Common myeloid progenitor, CD34-positive (primary cell): ENCODE measurements at regions of chr9 and their contacts with region 1.

Region 1: DNA sequence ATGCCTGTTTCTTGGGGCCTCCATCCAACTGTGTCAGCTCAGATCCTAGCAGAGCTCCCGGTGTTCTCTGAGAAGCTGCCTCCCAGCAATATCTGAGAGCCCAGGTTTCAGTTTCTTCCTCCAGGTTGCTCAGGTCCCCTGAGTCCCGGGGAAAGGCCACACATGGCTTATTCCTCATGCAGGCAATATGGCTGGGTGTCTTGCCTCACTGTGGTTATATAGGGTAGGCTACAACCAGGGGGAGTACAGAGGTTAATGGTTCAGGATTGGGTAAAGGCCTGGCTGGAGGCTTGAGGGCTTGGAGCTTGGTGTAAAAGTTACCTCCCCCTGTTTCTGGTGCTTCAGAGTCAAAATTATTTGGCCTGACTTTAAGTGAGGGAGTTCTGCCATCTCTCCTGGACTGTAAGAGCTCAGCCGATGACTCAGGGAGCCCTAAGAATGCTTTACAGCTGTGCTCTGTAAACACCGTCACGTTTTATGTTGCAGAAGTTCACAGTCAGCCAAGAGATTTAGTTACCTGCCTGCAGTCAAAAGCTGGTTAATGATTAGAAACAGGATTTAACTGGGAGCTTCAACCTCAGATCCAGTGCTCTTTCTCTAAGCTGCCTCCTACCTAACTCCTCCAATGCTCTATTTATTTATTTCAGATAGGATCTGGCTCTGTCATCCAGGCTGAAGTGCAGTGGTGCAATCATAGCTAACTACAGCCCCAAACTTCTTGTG is 24.3 kb upstream of the UBAP2 start:
- DNase-seq: no peak
- H3K4me3 ChIP-seq: no peak overlapping the region
- H3K27ac ChIP-seq: no peak overlapping the region
- H3K4me1 ChIP-seq: no peaks in the 10 kb centered on the region
- H3K27me3 ChIP-seq: no peaks in the 10 kb centered on the region

Region 2: DNA sequence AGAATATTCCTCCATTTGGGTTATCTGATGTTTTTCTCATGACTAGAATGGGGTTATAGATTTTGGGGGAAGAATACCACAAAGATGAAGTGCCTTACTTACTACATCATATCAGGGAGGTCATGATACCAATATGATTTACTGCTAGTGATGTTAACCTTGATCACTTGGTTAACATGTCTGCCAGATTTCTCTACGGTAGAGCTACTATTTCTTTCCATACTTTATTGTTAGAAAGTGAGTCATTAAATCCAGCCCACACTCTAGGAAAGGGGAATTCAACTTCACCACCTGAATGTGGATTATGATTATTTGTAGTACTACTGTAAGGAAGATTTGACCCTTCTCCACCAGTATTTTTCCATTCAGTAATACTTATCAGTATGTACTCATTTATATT is 191.4 kb before region 1 on chr9:
- CTCF ChIA-PET with region 1: no interaction called
- POLR2A ChIA-PET with region 1: no interaction called
- DNase-seq: no peak
- H3K4me3 ChIP-seq: no peak overlapping the region
- H3K27ac ChIP-seq: no peak overlapping the region
- H3K4me1 ChIP-seq: peaks cover 0 to 2% (median 0%) of the 10 kb centered on the region in 4 experiments
- H3K27me3 ChIP-seq: no peaks in the 10 kb centered on the region

Region 3: DNA sequence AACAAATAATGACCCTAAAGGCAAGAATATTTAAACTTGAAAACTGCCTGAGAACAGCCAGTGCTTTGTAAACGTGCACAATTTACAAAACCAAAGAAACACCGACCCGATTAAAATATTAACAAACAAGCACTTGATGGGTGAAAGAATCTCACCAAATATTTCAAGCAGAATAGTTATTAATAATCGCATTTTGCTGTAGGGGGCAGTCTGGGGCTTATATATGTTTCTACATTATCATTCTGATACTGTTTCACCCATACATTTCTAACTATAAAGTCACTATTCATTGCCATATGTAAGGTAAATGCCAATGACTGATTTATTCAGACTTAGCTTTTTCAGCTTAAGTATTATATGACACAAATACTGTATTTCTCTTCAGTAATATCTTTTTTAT is 62.0 kb before region 1 on chr9:
- CTCF ChIA-PET with region 1: interaction called, 18 read pairs
- POLR2A ChIA-PET with region 1: no interaction called
- DNase-seq: peak; percentile 23 to 53 (median 46)
- H3K4me3 ChIP-seq: no peak overlapping the region
- H3K27ac ChIP-seq: no peak overlapping the region
- H3K4me1 ChIP-seq: no peaks in the 10 kb centered on the region
- H3K27me3 ChIP-seq: no peaks in the 10 kb centered on the region

Region 4: DNA sequence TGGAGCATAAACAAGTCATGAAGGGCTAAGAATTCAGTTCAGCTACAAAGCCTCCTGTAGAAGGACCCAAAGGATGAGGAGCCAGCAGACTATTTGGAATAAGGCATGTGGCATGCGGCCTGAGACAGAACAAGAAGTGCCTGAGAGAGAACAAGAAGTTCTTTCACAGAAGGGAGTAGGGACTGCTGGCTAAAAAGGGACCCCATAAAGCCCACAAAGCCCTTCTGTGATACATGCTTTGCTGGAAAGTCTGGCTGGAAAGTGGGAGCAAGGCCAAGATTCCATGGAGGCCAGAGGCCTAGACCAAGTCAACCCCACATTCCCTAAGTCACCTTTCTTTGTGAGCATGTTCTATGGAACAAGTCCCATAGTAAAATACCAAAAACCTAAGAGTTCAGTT is 11.5 kb after region 1 on chr9:
- CTCF ChIA-PET with region 1: interaction called, 12 read pairs
- POLR2A ChIA-PET with region 1: no interaction called
- DNase-seq: no peak
- H3K4me3 ChIP-seq: no peak overlapping the region
- H3K27ac ChIP-seq: no peak overlapping the region
- H3K4me1 ChIP-seq: no peaks in the 10 kb centered on the region
- H3K27me3 ChIP-seq: no peaks in the 10 kb centered on the region

Region 5: GRCh38 chr9:34479431-34479866 is 406.4 kb after region 1 on chr9:
- CTCF ChIA-PET with region 1: no interaction called
- POLR2A ChIA-PET with region 1: no interaction called
- DNase-seq: no peak
- H3K4me3 ChIP-seq: peak overlapping the region in 1 of 7 experiments; percentile 4
- H3K27ac ChIP-seq: no peak overlapping the region
- H3K4me1 ChIP-seq: no peaks in the 10 kb centered on the region
- H3K27me3 ChIP-seq: peaks cover 0 to 13% (median 8%) of the 10 kb centered on the region in 5 experiments

Region 6: GRCh38 chr9:34500623-34501267 is 427.7 kb after region 1 on chr9:
- CTCF ChIA-PET with region 1: no interaction called
- POLR2A ChIA-PET with region 1: no interaction called
- DNase-seq: peak; percentile 42 to 71 (median 58)
- H3K4me3 ChIP-seq: no peak overlapping the region
- H3K27ac ChIP-seq: no peak overlapping the region
- H3K4me1 ChIP-seq: no peaks in the 10 kb centered on the region
- H3K27me3 ChIP-seq: peaks cover 0 to 12% (median 0%) of the 10 kb centered on the region in 5 experiments